Activated CD4-positive, alpha-beta memory T cell treated with anti-CD3 and anti-CD28 coated beads for 36 hours (primary cell): ENCODE measurements at regions of chr19 and their contacts with region 1.

Region 1: DNA sequence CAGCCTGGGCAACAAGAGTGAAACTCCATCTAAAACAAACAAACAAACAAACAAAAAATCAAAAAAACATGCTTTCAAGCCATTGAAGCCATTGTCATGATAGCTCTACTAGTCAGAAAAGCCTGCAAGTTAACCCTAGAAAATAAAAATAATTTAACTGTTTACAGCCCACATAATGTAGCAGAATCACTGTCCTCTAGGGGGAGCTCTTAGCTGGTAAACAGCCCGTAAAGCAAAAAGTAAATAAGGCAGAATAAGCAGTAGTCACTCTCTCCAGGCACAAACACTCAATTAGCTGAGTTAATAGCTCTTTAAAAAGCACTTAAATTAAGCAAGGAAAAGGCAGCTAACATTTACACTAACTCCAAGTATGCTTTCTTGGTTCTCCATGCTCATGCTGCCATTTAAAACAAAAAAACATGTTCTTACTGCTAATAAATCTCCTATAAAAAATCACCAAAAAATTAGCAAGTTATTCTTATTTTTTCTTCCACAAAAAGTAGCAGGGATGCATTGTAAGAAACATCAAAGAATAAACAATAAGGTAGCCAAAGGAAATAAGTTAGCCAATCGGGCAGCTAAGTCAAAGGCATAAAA is 11.3 kb downstream of the LILRB4 start:
- DNase-seq: no peak
- H3K4me3 Mint-ChIP-seq: no peak overlapping the region
- H3K27ac Mint-ChIP-seq: no peak overlapping the region
- H3K4me1 Mint-ChIP-seq: no peaks in the 10 kb centered on the region
- H3K27me3 Mint-ChIP-seq: peaks cover 16% of the 10 kb centered on the region

Region 2: DNA sequence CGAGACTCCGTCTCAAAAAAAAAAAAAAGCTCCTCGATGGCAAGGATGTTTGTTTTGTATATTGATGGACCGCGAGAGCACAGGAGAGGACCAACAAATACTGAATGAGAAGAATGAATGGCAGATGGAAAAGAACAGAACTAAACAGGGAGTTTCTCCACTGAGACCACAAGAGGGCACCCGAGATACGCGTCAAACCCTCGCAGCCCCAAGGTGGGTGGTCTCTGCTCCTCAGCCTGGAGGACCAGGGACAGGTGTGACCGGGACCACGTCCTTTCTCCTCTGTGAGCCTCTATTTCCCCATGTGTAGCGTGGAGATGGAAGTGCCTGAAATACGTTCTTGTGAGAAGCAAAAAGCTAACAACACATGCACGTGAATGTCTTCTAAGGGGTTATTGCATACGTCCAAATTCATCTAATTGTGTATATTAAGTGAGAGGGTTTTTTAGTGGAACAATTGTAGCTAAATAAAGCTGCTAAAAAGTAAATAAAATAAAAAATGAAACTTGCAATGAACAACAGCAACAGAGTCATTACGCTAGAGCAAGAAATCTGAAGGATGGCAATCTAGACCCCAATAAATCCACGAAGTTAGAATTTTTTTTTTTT is 192.7 kb before region 1 on chr19:
- CTCF ChIA-PET with region 1: interaction called, 77 read pairs
- POLR2A ChIA-PET with region 1: no interaction called
- intact Hi-C with region 1: loop called (anchors 1 kb)
- DNase-seq: peak; percentile 37
- H3K4me3 Mint-ChIP-seq: peak overlapping the region; percentile 27
- H3K27ac Mint-ChIP-seq: peak overlapping the region; percentile 4
- H3K4me1 Mint-ChIP-seq: peaks cover 5% of the 10 kb centered on the region
- H3K27me3 Mint-ChIP-seq: peaks cover 28% of the 10 kb centered on the region

Region 3: GRCh38 chr19:54653181-54653809 is 20.8 kb before region 1 on chr19:
- CTCF ChIA-PET with region 1: interaction called, 53 read pairs
- POLR2A ChIA-PET with region 1: no interaction called
- intact Hi-C with region 1: no loop called
- DNase-seq: no peak
- H3K4me3 Mint-ChIP-seq: no peak overlapping the region
- H3K27ac Mint-ChIP-seq: no peak overlapping the region
- H3K4me1 Mint-ChIP-seq: no peaks in the 10 kb centered on the region
- H3K27me3 Mint-ChIP-seq: peaks cover 8% of the 10 kb centered on the region

Region 4: GRCh38 chr19:54662730-54663129 is 11.4 kb before region 1 on chr19 and contains the start of gene LILRB4:
- CTCF ChIA-PET with region 1: interaction called, 12 read pairs
- POLR2A ChIA-PET with region 1: no interaction called
- intact Hi-C with region 1: no loop called
- DNase-seq: no peak
- H3K4me3 Mint-ChIP-seq: no peak within 1 kb of the TSS
- H3K27ac Mint-ChIP-seq: no peak within 1 kb of the TSS
- H3K4me1 Mint-ChIP-seq: no peaks in the 10 kb centered on the region
- H3K27me3 Mint-ChIP-seq: peaks cover 17% of the 10 kb centered on the region
- total RNA-seq, gene LILRB4: not detected

Region 5: GRCh38 chr19:54684527-54684926 is 10.4 kb after region 1 on chr19:
- CTCF ChIA-PET with region 1: interaction called, 16 read pairs
- POLR2A ChIA-PET with region 1: no interaction called
- intact Hi-C with region 1: no loop called
- DNase-seq: no peak
- H3K4me3 Mint-ChIP-seq: no peak overlapping the region
- H3K27ac Mint-ChIP-seq: no peak overlapping the region
- H3K4me1 Mint-ChIP-seq: no peaks in the 10 kb centered on the region
- H3K27me3 Mint-ChIP-seq: peaks cover 9% of the 10 kb centered on the region